ENCODE measurements at regions of chr9 and their contacts with region 1.

Region 1: GRCh38 chr9:129548291-129549135 is 72.4 kb downstream of the C9orf50 start:
- DNase-seq: no peak
- ATAC-seq: no peak
- H3K4me3 ChIP-seq: peak overlapping the region in 1 of 2 experiments; percentile 54; a peak in 1 of 4 replicates
- H3K27ac ChIP-seq: no peak overlapping the region
- H3K4me1 ChIP-seq: peaks cover 4% of the 10 kb centered on the region; the same call in 1 of the 2 replicates
- H3K27me3 ChIP-seq: no peaks in the 10 kb centered on the region
- CTCF ChIP-seq: no peak

Region 2: DNA sequence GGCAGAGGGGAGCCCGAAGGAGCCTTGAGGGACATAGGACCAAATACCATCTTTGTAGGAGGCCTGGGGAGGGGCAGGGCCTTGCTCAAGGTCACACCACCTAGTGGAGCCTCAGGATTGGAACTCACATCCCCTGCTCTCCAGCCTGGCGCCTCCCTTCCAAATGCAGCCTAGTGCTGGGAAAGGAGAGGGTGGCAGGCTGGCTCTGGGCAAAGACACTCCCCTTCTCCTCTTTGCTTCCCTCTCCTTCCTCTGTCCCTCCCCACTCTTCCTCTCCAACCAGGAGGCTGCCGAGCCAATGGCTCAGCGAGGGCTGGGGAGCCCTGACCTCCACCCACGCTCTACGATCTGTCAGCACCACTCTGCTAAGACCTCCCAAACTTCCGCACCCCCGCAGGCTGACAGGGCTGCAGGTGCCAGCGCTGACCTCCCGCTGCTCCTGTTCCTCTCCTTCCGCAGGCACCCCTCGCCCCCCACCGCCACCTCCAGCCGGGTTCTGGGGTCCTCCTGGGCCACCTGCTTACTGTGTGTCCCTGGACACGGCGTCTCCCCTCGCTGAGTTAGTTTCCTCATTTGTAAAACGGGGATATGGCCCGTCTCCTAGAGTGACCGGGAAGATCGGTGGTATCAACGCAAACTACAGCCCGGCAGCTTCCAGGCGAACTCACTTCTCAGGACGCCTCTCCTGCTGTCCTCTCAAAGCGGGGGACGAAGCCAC is 19.5 kb after region 1 on chr9:
- CTCF ChIA-PET with region 1: interaction called, 11 read pairs
- POLR2A ChIA-PET with region 1: no interaction called
- in situ Hi-C with region 1: no loop called
- intact Hi-C with region 1: no loop called
- DNase-seq: no peak
- ATAC-seq: peak; percentile 79
- H3K4me3 ChIP-seq: peak overlapping the region; percentile 47 to 65
- H3K27ac ChIP-seq: peak overlapping the region; percentile 48; the same call in 1 of the 2 replicates
- H3K4me1 ChIP-seq: peaks cover 6% of the 10 kb centered on the region
- H3K27me3 ChIP-seq: no peaks in the 10 kb centered on the region
- CTCF ChIP-seq: no peak

Measured in Panc1 (cell line).